CD14-positive monocyte (primary cell): ENCODE measurements at regions of chr6 and their contacts with region 1.

Region 1: DNA sequence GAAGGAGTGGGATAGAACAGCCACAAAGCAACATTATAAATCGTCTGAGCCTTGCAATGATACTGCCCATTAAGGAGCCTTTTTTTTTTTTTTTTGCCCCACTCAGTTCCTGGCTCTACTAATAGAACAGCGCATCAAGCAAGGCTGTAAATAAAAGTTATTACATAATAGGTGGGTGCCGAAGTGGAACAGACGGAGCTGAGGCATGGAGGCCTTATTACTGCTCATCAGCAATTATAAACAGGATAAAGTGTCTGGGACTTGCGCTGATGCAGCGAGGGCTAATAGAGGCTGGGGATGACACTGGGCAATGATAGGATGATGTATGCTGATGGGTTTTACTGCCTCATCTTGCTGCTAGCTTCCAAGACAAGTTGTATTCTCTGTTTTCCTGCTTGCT is 272.1 kb downstream of the ZFAND3 start:
- DNase-seq: no peak
- H3K4me3 ChIP-seq: no peak overlapping the region
- H3K4me3 Mint-ChIP-seq: no peak overlapping the region
- H3K27ac ChIP-seq: no peak overlapping the region
- H3K27ac Mint-ChIP-seq: peak overlapping the region in 1 of 7 donors; percentile 52
- H3K4me1 ChIP-seq: no peaks in the 10 kb centered on the region
- H3K4me1 Mint-ChIP-seq: peaks cover 17% of the 10 kb centered on the region
- H3K27me3 ChIP-seq: no peaks in the 10 kb centered on the region
- H3K27me3 Mint-ChIP-seq: no peaks in the 10 kb centered on the region
- CTCF ChIP-seq: no peak

Region 2: DNA sequence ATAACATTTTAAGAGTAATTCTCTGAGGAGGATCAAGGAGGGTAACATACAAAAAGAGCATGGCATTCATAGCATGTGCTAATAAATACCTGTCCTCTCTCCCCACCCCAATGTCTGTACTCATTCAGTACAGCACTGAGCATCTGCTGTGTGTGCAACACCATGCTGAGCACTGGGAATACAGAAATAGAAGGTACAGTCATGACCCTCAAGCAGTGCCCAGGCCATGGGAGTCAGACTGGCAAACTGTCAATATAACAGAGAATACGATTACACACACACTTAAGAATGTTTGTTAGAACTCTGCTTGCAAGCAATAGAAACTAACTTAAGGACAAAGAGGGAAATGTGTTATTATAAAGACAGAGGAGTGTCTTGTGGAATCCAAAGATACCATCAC is 296.8 kb before region 1 on chr6:
- intact Hi-C with region 1: no loop called
- DNase-seq: no peak
- H3K4me3 ChIP-seq: no peak overlapping the region
- H3K4me3 Mint-ChIP-seq: no peak overlapping the region
- H3K27ac ChIP-seq: no peak overlapping the region
- H3K27ac Mint-ChIP-seq: no peak overlapping the region
- H3K4me1 ChIP-seq: peaks cover 7 to 10% of the 10 kb centered on the region in 2 donors
- H3K4me1 Mint-ChIP-seq: peaks cover 14% of the 10 kb centered on the region
- H3K27me3 ChIP-seq: no peaks in the 10 kb centered on the region
- H3K27me3 Mint-ChIP-seq: peaks cover 2 to 6% (median 4%) of the 10 kb centered on the region in 3 donors
- CTCF ChIP-seq: no peak

Region 3: GRCh38 chr6:37990762-37991525 is 100.7 kb before region 1 on chr6:
- intact Hi-C with region 1: no loop called
- DNase-seq: no peak
- H3K4me3 ChIP-seq: no peak overlapping the region
- H3K4me3 Mint-ChIP-seq: no peak overlapping the region
- H3K27ac ChIP-seq: no peak overlapping the region
- H3K27ac Mint-ChIP-seq: no peak overlapping the region
- H3K4me1 ChIP-seq: no peaks in the 10 kb centered on the region
- H3K4me1 Mint-ChIP-seq: peaks cover 6% of the 10 kb centered on the region
- H3K27me3 ChIP-seq: no peaks in the 10 kb centered on the region
- H3K27me3 Mint-ChIP-seq: no peaks in the 10 kb centered on the region
- CTCF ChIP-seq: no peak

Region 4: DNA sequence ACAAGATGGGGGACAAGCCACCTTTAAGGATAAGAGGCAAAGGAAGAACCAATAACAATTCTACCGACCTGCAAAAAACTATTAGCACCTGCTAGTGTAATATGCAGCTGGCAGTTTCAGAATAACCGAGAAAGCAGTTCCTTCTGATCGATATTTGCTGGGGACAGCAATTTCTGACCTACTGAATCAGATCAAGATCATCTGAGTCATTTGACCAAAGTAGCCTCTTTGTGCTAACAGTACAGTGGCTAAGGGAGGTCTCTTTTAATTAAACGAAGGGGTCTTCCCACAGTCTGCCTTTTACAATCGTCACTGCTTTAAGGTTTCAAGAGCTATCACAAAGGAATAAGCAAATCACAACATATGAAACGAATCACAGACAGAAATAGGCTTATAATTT is 229.2 kb after region 1 on chr6:
- intact Hi-C with region 1: loop called in 1 of 2 experiments (anchors 5 kb)
- DNase-seq: no peak
- H3K4me3 ChIP-seq: no peak overlapping the region
- H3K4me3 Mint-ChIP-seq: no peak overlapping the region
- H3K27ac ChIP-seq: no peak overlapping the region
- H3K27ac Mint-ChIP-seq: peak overlapping the region in 1 of 7 donors; percentile 55
- H3K4me1 ChIP-seq: no peaks in the 10 kb centered on the region
- H3K4me1 Mint-ChIP-seq: no peaks in the 10 kb centered on the region
- H3K27me3 ChIP-seq: no peaks in the 10 kb centered on the region
- H3K27me3 Mint-ChIP-seq: peaks cover 0 to 2% (median 0%) of the 10 kb centered on the region in 3 donors
- CTCF ChIP-seq: no peak

Region 5: DNA sequence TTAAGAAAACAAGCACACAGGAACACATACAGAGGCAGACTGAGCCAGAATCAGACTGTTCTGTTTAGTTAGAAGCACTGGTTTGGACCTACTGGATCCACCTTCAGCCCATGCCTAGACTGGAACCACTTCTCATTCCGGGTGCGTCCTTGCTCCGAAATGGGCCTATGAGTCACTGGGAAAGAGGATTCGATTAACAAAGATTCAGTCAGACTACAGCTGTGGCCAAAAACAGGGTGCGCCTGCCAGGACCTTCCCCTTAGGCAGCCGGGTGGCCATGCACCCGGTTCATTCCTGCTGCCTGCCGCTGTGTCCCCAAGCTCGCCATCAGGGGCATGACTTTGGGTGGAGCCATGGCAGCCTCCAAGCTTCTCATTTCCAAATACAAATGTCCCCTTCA is 1152.2 kb after region 1 on chr6:
- intact Hi-C with region 1: no loop called
- DNase-seq: no peak
- H3K4me3 ChIP-seq: no peak overlapping the region
- H3K4me3 Mint-ChIP-seq: no peak overlapping the region
- H3K27ac ChIP-seq: no peak overlapping the region
- H3K27ac Mint-ChIP-seq: no peak overlapping the region
- H3K4me1 ChIP-seq: no peaks in the 10 kb centered on the region
- H3K4me1 Mint-ChIP-seq: peaks cover 4% of the 10 kb centered on the region
- H3K27me3 ChIP-seq: no peaks in the 10 kb centered on the region
- H3K27me3 Mint-ChIP-seq: peaks cover 1 to 4% (median 4%) of the 10 kb centered on the region in 3 donors
- CTCF ChIP-seq: no peak